ENCODE measurements at regions of chr12 and their contacts with region 1.

Region 1: DNA sequence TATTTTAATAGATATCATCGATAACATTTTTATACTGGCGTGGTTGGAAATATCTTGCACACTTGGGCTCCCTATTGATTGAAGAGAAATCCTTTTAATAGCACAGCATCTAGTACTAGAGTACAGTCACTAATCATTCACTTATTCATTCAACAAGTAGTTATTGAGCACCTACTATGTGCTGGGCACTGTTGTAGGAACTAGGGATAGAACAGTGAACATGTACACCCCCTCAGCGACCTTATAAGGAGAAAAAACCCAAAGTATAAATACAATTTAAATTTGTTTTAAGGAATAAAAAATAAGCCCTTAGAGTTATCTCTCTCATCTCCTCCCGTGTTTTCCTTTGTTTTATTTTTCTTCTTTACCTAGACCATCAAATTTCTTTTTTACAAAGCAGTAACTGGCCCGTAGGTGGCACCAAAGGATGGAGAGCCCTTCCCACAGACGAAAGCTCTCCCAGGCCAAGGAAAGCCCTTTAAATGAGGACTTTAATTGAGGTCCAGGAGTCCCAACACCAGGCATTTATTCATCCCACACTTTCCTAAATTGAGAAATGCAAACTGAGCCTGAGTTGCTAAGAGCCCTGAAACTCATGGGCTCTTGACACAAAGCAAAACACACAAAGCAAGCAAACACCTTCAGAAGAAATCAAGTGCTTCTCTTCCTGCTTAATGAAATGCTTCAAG is 29.0 kb downstream of the PEBP1 start:
- DNase-seq: no peak
- H3K4me3 ChIP-seq: no peak overlapping the region
- CTCF ChIP-seq: peak; percentile 45

Region 2: DNA sequence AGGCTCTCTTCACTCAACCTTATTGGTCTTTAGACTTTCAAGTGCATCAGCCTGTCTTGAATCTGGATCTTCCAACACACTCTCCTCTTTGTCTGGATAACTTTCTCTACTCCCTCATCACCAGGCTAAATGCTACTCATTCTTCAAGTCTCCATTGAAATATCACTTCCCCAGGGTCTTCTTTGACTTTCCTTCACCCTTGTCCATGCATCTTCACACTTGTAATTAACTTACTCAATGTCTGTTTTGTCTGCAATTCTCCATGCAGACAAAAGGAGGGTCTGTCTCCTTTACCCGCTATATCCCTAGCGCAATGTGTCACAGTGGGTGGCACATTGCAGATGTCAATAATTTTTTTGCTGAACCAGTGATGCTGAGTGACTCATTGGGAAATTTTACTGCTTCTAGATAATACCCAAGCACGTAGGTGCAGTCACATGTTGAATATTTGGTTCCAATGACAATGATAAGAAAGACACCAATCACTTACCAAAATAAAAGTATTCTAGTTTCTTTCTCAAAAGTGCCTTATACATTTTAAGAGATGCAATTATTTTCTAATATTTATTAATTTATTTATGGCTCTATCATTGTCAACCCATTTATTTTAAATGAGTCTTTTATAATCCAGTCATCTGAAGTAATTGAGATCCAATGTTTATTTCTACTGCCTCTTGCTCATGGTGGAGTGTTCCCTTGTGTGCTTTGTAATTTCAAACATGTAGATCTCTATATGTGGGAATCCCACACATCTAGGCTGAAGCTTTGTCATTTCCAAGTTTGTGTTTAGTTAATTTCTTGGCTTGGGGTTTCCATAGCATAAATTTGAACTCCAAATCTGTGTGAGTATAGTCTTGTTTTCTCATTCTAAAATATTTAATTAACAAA is 170.1 kb before region 1 on chr12:
- CTCF ChIA-PET with region 1: no interaction called
- POLR2A ChIA-PET with region 1: no interaction called
- DNase-seq: no peak
- H3K4me3 ChIP-seq: no peak overlapping the region
- CTCF ChIP-seq: no peak

Region 3: GRCh38 chr12:118150625-118151024 is 14.3 kb before region 1 on chr12:
- CTCF ChIA-PET with region 1: interaction called, 10 read pairs
- POLR2A ChIA-PET with region 1: no interaction called
- DNase-seq: no peak
- H3K4me3 ChIP-seq: no peak overlapping the region
- CTCF ChIP-seq: no peak

Region 4: DNA sequence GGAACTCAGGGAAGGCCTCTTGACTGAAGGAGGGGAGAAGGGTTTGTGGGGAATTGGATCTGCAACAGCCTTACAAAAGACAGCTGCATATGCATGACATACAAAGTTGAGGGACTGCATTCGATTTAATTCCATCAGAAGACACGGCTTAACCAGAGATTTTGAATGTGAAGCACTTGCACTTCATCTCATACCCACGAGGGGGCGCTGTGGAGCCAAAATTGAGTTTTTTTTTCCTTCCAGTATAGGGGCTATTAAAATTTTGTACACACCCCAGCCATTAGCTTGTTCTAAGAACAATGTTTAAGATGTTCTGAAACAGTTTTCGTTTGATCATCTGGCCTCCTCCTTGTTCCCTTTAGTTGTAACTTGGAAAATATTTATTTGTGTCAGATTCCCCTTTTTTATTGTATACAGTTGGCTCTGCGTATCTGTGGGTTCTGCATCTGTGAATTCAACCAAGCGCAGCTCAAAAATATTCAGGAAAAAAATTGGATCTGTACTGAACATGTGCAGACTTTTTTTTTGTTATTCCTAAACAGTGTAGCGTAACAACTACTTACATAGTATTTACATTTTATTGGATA is 213.0 kb after region 1 on chr12:
- CTCF ChIA-PET with region 1: interaction called, 112 read pairs
- POLR2A ChIA-PET with region 1: no interaction called
- DNase-seq: no peak
- H3K4me3 ChIP-seq: peak overlapping the region; percentile 87
- CTCF ChIP-seq: peak; percentile 75

Measured in AG04449 (cell line).